ENCODE measurements at regions of chr1 and their contacts with region 1.

Region 1: GRCh38 chr1:8097077-8097799 is 71.1 kb upstream of the ERRFI1 start:
- DNase-seq: peak in 1 of 2 experiments; percentile 94
- ATAC-seq: peak; percentile 67 to 87
- H3K4me3 ChIP-seq: no peak overlapping the region
- H3K27ac ChIP-seq: peak overlapping the region; percentile 94 to 95
- H3K4me1 ChIP-seq: peaks cover 65% of the 10 kb centered on the region
- CTCF ChIP-seq: no peak
- EP300 ChIP-seq: peak in 1 of 2 experiments; percentile 59; a peak in 1 of 5 replicates
- POLR2A ChIP-seq: no peak
- RAD21 ChIP-seq: peak in 1 of 2 experiments; percentile 24; a peak in 2 of 5 replicates

Region 2: GRCh38 chr1:8077120-8077573 is 20.1 kb before region 1 on chr1:
- CTCF ChIA-PET with region 1: interaction called, 6 read pairs
- POLR2A ChIA-PET with region 1: interaction called, 10 read pairs
- DNase-seq: peak; percentile 77 to 93
- ATAC-seq: peak; percentile 94 to 99
- H3K4me3 ChIP-seq: no peak overlapping the region
- H3K27ac ChIP-seq: peak overlapping the region; percentile 88 to 90
- H3K4me1 ChIP-seq: peaks cover 62% of the 10 kb centered on the region
- CTCF ChIP-seq: no peak
- EP300 ChIP-seq: peak; percentile 39 to 50; a peak in 2 of 5 replicates
- POLR2A ChIP-seq: no peak
- RAD21 ChIP-seq: peak; percentile 20 to 38; a peak in 4 of 5 replicates

Measured in A549 (cell line).